ENCODE measurements at regions of chr12 and their contacts with region 1.

Region 1: GRCh38 chr12:442235-442884 is 17.4 kb upstream of the B4GALNT3 start:
- DNase-seq: peak; percentile 41
- H3K4me3 Mint-ChIP-seq: no peak overlapping the region
- H3K27ac Mint-ChIP-seq: no peak overlapping the region
- H3K4me1 Mint-ChIP-seq: peaks cover under 1% of the 10 kb centered on the region
- H3K27me3 Mint-ChIP-seq: peaks cover 2% of the 10 kb centered on the region

Region 2: GRCh38 chr12:128079-128478 is 314.3 kb before region 1 on chr12:
- CTCF ChIA-PET with region 1: no interaction called
- POLR2A ChIA-PET with region 1: no interaction called
- DNase-seq: no peak
- H3K4me3 Mint-ChIP-seq: no peak overlapping the region
- H3K27ac Mint-ChIP-seq: no peak overlapping the region
- H3K4me1 Mint-ChIP-seq: no peaks in the 10 kb centered on the region
- H3K27me3 Mint-ChIP-seq: peaks cover 13% of the 10 kb centered on the region

Region 3: DNA sequence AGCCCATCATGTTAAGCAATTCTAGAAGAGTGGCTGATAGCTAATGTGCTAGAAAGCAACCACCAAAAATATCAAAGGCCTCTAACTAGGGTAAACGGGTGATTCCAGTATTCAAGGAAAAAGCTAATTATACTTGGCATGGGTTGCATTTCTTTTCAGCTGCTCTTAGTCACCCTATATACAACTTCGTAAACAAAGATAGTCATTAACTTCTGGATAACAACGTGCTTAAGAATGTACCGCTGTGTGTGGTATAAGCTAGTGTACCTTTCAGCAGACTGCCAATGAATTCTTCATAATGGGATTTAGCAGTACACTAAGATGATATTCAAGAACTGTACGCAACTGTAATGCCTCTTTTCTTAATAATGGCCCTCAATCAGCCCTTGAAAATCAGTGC is 137.6 kb before region 1 on chr12:
- CTCF ChIA-PET with region 1: no interaction called
- POLR2A ChIA-PET with region 1: no interaction called
- DNase-seq: no peak
- H3K4me3 Mint-ChIP-seq: no peak overlapping the region
- H3K27ac Mint-ChIP-seq: no peak overlapping the region
- H3K4me1 Mint-ChIP-seq: peaks cover 45% of the 10 kb centered on the region
- H3K27me3 Mint-ChIP-seq: no peaks in the 10 kb centered on the region

Region 4: DNA sequence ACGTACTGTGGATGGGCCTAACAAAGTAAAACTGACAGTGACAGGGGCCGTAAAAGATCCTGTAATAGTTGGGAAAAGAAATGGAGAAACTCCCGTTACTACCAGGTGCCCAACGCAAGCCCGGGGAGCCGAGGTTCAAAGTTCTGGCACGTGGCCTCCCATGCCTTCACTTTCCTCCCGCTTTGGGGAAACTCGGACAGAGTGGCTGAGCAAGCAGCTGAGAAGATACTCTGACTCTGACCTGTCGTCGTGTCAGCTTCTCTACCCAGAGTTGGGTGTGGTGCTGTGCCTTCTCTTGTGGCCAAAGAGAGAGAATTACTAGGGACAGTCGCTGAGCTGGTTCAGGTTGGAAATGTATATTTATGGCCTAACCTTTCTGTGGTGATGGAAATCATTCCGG is 19.1 kb after region 1 on chr12:
- CTCF ChIA-PET with region 1: no interaction called
- POLR2A ChIA-PET with region 1: no interaction called
- DNase-seq: no peak
- H3K4me3 Mint-ChIP-seq: peak overlapping the region; percentile 69
- H3K27ac Mint-ChIP-seq: no peak overlapping the region
- H3K4me1 Mint-ChIP-seq: peaks cover 9% of the 10 kb centered on the region
- H3K27me3 Mint-ChIP-seq: peaks cover 69% of the 10 kb centered on the region

Region 5: DNA sequence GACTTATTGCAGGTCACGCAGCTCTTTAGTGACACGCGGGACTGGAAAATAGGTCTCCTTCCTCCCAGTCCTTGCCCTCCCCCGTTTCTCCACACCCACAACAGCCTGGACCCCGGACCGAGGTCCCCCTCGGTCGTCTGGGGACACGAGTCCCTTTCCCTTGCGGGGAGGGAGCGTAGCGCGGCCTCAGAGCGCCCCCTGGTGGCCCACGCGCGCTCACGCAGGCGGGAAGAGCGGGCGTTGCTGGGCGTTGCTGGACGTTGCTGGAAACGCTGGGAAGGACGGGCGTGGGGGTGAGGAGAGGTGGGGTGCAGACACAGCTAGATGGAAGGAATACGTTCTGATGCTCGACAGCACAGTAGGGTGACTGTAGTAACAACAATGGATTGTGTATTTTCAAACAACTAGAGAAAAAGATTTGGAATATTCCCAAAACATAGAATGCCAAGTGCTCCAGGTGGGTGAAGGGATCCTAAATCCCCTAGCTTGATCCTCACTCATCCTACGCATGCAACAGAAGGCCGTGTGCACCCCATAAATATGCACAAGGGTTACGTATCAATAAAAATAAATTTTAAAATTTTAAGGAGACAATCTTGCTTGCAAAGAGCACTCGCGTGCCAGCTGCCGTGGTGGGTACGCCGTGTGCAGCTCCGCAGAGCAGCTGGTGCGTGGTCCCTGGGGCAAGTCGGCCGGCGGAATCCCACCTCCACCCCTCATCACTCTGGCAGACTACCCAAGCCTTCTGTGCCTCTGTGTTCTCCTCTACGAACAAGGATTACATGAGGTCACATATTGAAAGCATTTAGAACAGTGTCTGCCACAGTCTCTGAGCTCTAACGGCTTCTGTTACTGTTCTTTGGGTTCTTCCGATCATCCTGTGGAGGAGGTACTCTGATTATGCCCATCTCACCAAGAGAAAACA is 104.8 kb after region 1 on chr12:
- CTCF ChIA-PET with region 1: interaction called, 20 read pairs
- POLR2A ChIA-PET with region 1: no interaction called
- DNase-seq: peak; percentile 72
- H3K4me3 Mint-ChIP-seq: no peak overlapping the region
- H3K27ac Mint-ChIP-seq: no peak overlapping the region
- H3K4me1 Mint-ChIP-seq: peaks cover 19% of the 10 kb centered on the region
- H3K27me3 Mint-ChIP-seq: peaks cover 15% of the 10 kb centered on the region

Region 6: DNA sequence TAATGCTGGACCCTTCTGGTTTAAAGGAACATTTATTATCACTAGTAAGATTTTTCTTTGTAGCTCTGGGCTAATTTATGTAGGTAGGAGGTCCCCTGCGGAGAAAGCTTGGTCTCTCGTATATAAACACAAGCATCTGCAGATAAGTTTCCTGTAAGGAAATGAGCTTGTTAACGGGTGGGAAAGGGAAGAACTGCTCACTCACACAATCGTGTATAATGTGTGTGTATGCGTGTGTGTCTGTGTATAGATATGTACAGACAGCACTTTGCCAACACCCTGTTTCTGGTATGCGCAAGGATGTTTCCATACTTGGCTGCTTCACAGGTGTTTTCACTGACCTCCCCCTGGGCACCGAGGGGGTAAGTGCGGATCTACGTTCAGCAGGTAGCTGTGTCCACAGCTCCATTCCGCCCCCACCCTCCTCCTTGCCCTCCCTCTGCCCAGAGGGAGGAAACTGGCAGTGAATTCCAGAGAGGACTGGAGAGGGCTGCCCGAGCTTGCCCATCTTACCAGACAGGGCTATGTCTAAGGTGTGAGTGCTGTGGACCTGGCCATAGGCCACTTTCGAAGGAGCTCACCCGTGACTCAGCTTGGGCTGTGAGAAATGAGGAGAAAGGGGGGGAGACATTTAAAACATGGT is 155.7 kb after region 1 on chr12:
- CTCF ChIA-PET with region 1: no interaction called
- POLR2A ChIA-PET with region 1: no interaction called
- DNase-seq: no peak
- H3K4me3 Mint-ChIP-seq: no peak overlapping the region
- H3K27ac Mint-ChIP-seq: no peak overlapping the region
- H3K4me1 Mint-ChIP-seq: no peaks in the 10 kb centered on the region
- H3K27me3 Mint-ChIP-seq: peaks cover 5% of the 10 kb centered on the region

Measured in activated CD4-positive, alpha-beta memory T cell treated with anti-CD3 and anti-CD28 coated beads, Interleukin-2, amount 10 ng/mL, durations not matched to agents 7 days and 5 days (primary cell).